ENCODE measurements at regions of chr1 and their contacts with region 1.

Region 1: GRCh38 chr1:172269644-172270043 is 150.8 kb upstream of the C1orf105 start:
- DNase-seq: no peak
- H3K4me3 Mint-ChIP-seq: no peak overlapping the region
- H3K27ac Mint-ChIP-seq: peak overlapping the region; percentile 67
- H3K4me1 Mint-ChIP-seq: peaks cover 64% of the 10 kb centered on the region
- H3K27me3 Mint-ChIP-seq: no peaks in the 10 kb centered on the region

Region 2: DNA sequence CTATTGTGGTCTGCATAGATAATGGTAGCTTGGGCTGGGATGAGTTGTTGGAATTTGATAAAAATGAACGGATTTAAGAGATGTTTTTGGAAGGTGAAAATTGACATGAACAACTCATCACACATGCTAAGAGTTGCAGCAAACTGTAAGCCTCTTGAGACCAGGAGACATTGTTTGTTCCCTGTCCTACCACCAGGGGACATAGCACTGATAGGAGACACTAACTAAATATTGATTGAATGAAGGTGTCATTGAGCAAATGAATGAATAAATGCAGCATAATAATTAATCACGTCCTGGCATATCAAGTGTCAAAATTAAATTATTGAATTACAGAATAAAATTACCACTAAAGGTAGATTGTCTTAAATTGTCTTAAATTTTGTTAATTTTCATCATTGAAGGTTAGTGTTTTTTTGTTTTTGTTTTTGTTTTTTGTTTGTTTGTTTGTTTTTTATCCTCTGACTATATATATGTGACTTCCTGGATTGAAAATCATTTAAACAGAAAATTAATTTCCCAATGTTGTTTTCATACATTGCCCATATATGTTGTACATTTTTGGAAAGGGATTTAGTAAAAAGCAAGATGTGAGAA is 134.5 kb before region 1 on chr1:
- intact Hi-C with region 1: loop called (anchors 5 kb)
- DNase-seq: no peak
- H3K4me3 Mint-ChIP-seq: no peak overlapping the region
- H3K27ac Mint-ChIP-seq: no peak overlapping the region
- H3K4me1 Mint-ChIP-seq: peaks cover 20% of the 10 kb centered on the region
- H3K27me3 Mint-ChIP-seq: no peaks in the 10 kb centered on the region

Region 3: DNA sequence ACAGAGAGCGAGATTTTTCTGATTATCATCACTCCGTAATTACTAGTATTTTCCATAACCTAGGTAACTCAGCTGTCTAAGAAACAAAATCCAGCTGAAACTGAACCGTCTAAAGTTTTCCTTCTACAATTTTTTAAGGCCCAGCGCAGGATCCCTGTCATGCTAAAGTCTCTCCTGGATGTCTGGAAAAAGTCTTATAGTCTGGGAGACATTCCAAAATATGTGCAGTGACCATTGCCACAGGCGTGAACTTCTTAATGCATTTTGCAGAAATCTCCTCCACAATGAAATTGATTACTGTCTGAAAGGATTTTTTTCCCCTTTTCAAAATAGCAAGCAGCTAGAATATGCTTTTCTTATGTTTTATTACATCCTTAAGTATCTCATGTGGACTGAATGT is 58.4 kb before region 1 on chr1:
- intact Hi-C with region 1: no loop called
- DNase-seq: no peak
- H3K4me3 Mint-ChIP-seq: no peak overlapping the region
- H3K27ac Mint-ChIP-seq: no peak overlapping the region
- H3K4me1 Mint-ChIP-seq: peaks cover 10% of the 10 kb centered on the region
- H3K27me3 Mint-ChIP-seq: no peaks in the 10 kb centered on the region

Region 4: DNA sequence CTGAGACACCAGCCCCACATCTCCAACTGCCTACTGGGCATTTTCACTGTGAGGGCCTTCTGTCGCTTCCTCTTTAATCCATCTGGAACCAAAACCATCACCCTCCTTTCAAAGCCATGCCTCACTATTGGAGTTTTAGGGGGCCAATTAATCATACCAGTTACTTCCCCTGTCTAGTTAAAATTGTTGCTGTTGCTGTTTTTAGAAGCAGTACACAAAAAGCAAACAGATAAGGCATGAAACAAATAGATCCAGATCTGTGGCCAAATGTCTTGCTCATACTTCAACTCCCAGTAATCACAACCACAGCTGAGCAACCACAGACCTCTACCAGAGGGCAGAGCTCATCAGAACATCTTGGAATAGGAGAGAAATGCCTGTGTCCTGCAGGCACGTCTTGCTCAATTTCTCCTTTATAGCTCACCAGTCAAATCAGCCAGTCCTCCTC is 17.0 kb after region 1 on chr1:
- intact Hi-C with region 1: loop called (anchors 1 kb)
- DNase-seq: no peak
- H3K4me3 Mint-ChIP-seq: no peak overlapping the region
- H3K27ac Mint-ChIP-seq: no peak overlapping the region
- H3K4me1 Mint-ChIP-seq: peaks cover 8% of the 10 kb centered on the region
- H3K27me3 Mint-ChIP-seq: peaks cover 1% of the 10 kb centered on the region

Region 5: GRCh38 chr1:172343240-172344160 is 73.9 kb after region 1 on chr1:
- intact Hi-C with region 1: loop called (anchors 1 kb)
- DNase-seq: no peak
- H3K4me3 Mint-ChIP-seq: no peak overlapping the region
- H3K27ac Mint-ChIP-seq: peak overlapping the region; percentile 3
- H3K4me1 Mint-ChIP-seq: peaks cover 52% of the 10 kb centered on the region
- H3K27me3 Mint-ChIP-seq: no peaks in the 10 kb centered on the region

Region 6: DNA sequence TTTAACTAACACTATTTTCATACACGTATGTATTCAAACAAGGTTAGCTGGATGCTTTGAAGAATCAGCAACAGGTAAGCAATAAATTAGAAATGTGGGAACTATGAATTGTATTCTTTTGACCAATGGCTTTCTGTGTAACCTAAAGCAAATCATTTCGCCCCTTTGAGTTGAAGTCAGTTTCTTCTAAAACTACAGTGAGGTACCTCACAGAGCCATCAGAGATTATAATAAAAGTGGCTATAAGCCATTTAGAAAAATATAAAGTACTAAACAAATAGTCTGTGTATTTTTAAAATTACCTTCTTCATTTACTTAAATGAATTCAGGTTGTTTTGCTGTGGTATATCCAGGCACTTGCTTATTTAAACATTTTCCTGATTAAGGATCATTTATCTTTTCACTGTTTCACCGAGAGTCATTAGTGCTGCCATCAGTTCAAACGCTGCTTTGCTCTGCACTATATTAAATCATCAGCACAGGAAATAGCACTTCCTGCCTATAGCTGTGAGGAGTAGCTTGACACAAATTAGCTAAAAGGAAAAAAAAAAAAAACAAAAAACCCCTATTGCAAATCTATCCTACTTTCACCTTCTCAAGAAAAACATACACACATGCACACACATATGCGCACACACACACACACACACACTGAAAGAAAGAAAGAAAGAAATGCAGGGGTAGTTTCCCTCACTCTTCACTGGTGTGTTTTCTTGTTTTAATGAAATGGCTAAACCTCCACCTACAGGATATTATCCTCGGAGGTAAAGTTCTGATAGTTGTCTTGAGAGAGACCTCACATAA is 111.0 kb after region 1 on chr1:
- intact Hi-C with region 1: loop called (anchors 2 kb)
- DNase-seq: no peak
- H3K4me3 Mint-ChIP-seq: peak overlapping the region; percentile 52
- H3K27ac Mint-ChIP-seq: peak overlapping the region; percentile 80
- H3K4me1 Mint-ChIP-seq: peaks cover 26% of the 10 kb centered on the region
- H3K27me3 Mint-ChIP-seq: no peaks in the 10 kb centered on the region

Region 7: GRCh38 chr1:172532700-172533509 is 263.3 kb after region 1 on chr1 and contains the start of gene SUCO:
- intact Hi-C with region 1: loop called (anchors 5 kb)
- DNase-seq: peak; percentile 100
- H3K4me3 Mint-ChIP-seq: peak within 1 kb of the TSS; percentile 95
- H3K27ac Mint-ChIP-seq: peak within 1 kb of the TSS; percentile 99
- H3K4me1 Mint-ChIP-seq: peaks cover 38% of the 10 kb centered on the region
- H3K27me3 Mint-ChIP-seq: peaks cover 9% of the 10 kb centered on the region
- total RNA-seq, gene SUCO: 28.2 and 33.3 TPM in 2 replicates

Measured in activated T-helper 2 cell treated with anti-CD3 and anti-CD28 coated beads, Interferon-gamma antibody, Interleukin-2, Interleukin-4, amounts not matched to agents 10 μg/mL and 5 μg/mL and 100 μg/mL, durations not matched to agents 14 hours and 24 hours and 36 hours (primary cell).